Esophagus muscularis mucosa (tissue), 4 donors: ENCODE measurements at regions of chr22 and their contacts with region 1.

Region 1: DNA sequence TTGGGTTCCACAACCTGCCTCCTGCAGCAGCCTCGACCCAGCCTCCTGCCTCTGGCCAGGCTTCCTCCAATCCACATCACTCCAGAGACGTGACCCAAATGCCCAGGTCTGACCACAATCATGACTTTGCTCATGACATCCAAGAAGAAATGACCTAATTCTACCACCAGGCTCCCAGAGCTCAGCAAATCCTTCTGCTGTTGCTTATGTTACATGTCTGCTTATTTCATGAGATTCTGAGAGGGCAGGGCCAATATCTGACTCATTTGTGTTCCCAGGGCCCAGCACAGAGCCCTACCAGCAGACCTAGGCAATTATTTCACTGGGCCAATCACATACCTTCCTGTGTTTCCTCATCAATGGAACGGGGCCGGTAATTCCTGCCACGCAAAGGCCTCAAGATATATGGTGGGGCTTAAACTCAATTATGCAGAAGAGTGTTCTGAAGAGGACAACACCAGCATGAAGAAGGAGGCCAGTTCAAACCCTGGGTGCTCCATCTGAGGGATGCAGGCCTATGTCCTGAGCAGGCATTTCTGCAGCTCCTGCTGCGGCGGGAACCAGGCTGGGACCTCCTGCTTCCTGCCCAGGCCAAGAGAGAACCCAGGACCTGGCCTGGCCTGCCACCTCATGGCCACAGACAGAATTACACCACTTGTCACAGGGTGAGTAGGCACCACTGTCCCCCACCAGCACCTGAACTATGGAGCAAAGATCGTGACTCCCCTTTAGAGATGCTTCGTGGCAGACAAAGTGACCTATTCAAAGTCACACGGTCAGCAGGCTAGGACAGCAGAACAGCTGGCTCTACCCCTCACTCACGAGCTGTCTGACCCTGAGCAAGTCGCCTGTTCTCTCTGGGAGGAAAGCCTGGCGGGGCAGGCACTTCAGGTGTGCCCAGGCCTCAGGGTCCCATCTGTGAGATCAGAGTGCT is 5.9 kb downstream of the CENPM start:
- DNase-seq: no peak
- H3K4me3 ChIP-seq: no peak overlapping the region
- H3K27ac ChIP-seq: peak overlapping the region; percentile 2 to 48 (median 46)
- H3K4me1 ChIP-seq: peaks cover 19 to 30% (median 26%) of the 10 kb centered on the region in 4 donors
- H3K27me3 ChIP-seq: peaks cover 0 to 4% (median 0%) of the 10 kb centered on the region in 4 donors
- CTCF ChIP-seq: peak; percentile 90 to 97 (median 95)
- EP300 ChIP-seq: no peak
- POLR2A ChIP-seq: no peak

Region 2: DNA sequence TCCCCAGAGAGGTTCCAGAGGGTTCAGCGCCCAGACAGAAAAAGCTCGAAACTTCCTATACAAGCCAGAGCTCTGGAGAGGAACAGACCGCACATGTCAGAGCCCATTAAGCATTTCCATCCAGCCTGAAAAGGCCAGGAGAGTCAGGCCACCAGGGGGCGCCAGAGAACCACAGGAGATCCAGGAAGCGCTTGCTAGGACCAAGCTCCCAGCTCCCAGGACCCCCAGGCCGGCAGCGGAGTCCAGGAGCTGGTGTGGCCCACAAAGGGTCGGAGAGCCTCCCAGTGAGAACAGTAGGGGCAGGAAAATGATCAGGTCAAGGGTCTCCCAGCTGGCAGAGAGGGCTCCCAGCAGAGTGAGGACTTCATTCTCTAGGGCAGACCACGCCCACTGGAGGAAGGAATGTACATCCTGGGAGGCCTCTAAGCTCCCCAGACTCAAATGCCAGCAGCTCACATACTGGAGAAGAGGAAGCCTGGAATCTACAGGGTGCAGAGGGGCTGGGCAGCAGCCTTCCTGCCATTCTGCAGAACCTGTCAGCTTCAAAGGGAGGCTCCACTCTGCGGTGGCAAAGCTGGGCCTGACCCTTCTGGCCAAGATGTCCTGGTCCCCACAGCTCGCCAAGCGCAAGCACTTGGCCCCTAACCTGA is 243.8 kb before region 1 on chr22:
- intact Hi-C with region 1: loop called (anchors 2 kb)
- DNase-seq: peak; percentile 98
- H3K4me3 ChIP-seq: peak overlapping the region; percentile 30 to 51 (median 38)
- H3K27ac ChIP-seq: peak overlapping the region; percentile 26 to 38 (median 30)
- H3K4me1 ChIP-seq: peaks cover 19 to 25% (median 20%) of the 10 kb centered on the region in 4 donors
- H3K27me3 ChIP-seq: no peaks in the 10 kb centered on the region
- CTCF ChIP-seq: peak; percentile 93 to 97 (median 96)
- EP300 ChIP-seq: no peak
- POLR2A ChIP-seq: no peak

Region 3: DNA sequence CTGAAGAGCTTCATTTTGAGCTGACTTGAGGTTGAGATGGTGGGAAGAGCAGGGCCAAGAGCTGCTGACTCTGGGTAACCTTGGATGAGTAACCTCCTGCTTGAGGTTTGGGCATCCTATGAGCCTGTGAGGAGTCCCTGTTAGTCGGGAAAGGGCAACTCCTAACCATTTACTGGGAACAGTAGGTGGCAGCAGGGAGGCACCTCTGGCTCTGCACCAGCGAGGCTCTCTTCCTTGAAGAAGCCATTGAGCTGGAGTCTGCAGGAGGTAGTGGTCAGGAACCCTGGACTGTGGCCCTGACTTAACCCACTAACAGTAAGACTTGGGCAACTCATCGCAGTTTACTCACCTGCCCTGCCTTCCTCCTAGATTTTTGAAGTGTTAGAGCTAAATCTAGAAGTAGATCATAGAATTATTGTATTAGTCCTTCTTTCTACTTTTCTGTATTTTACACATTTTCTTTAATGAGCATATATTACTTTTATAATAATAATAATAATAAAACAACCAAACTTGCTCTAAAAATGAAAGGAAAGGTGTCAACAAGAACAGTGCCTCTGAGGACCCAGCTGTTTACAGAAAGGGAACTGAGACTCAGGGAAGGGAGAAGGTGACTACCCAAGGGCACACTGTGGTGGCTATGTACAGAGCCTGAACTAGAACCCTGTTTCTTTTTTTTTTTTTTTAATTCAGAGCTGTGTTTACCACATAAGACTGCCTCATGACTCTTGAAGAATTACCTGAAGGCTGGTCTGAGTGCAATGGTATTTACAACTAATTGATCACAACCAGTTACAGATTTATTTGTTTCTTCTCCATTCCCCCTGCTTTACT is 194.3 kb before region 1 on chr22:
- intact Hi-C with region 1: loop called (anchors 2 kb)
- DNase-seq: no peak
- H3K4me3 ChIP-seq: no peak overlapping the region
- H3K27ac ChIP-seq: no peak overlapping the region
- H3K4me1 ChIP-seq: peaks cover 0 to 4% (median 0%) of the 10 kb centered on the region in 4 donors
- H3K27me3 ChIP-seq: peaks cover 0 to 6% (median 0%) of the 10 kb centered on the region in 4 donors
- CTCF ChIP-seq: peak; percentile 54 to 75 (median 73)
- EP300 ChIP-seq: no peak
- POLR2A ChIP-seq: no peak

Region 4: GRCh38 chr22:41822317-41823060 is 118.6 kb before region 1 on chr22:
- intact Hi-C with region 1: loop called (anchors 1 kb)
- DNase-seq: no peak
- H3K4me3 ChIP-seq: no peak overlapping the region
- H3K27ac ChIP-seq: no peak overlapping the region
- H3K4me1 ChIP-seq: peaks cover 17 to 19% (median 18%) of the 10 kb centered on the region in 4 donors
- H3K27me3 ChIP-seq: no peaks in the 10 kb centered on the region
- CTCF ChIP-seq: peak; percentile 47 to 61 (median 58)
- EP300 ChIP-seq: no peak
- POLR2A ChIP-seq: no peak